ENCODE measurements at regions of chr3 and their contacts with region 1.

Region 1: GRCh38 chr3:132549890-132550578 is 47.0 kb upstream of the ACKR4 start:
- DNase-seq: no peak
- H3K4me3 ChIP-seq: no peak overlapping the region
- H3K27ac ChIP-seq: peak overlapping the region in 1 of 2 donors; percentile 25
- H3K4me1 ChIP-seq: no peaks in the 10 kb centered on the region
- H3K27me3 ChIP-seq: no peaks in the 10 kb centered on the region
- CTCF ChIP-seq: no peak
- POLR2A ChIP-seq: no peak

Region 2: GRCh38 chr3:132595014-132595413 is 45.0 kb after region 1 on chr3:
- intact Hi-C with region 1: loop called (anchors 10 kb)
- DNase-seq: no peak
- H3K4me3 ChIP-seq: no peak overlapping the region
- H3K27ac ChIP-seq: no peak overlapping the region
- H3K4me1 ChIP-seq: no peaks in the 10 kb centered on the region
- H3K27me3 ChIP-seq: no peaks in the 10 kb centered on the region
- CTCF ChIP-seq: no peak
- POLR2A ChIP-seq: no peak